MCF 10A (cell line): ENCODE measurements at regions of chr12 and their contacts with region 1.

Region 1: DNA sequence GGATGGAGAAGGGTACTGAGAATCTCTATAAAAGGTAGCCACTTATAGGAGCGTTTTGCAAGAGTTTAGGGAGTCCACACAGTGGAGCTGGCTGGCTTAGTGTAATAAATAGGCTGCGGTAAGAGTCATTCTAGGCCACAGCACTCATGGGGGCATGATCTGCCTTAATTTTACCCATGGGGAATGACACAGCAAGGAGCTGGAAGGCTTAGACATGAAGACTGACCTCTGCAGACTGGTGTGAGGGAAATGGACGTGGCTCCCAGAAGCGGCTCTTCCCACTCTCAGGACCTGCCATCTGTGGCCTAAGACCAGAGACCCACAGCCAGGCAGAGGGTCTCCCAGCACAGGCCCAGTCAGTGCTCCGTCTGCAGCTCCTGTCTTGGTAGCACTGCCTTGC is 173.3 kb downstream of the PPM1H start:
- DNase-seq: no peak
- H3K4me3 Mint-ChIP-seq: no peak overlapping the region
- H3K27ac Mint-ChIP-seq: no peak overlapping the region
- H3K4me1 Mint-ChIP-seq: peaks cover 5% of the 10 kb centered on the region
- H3K27me3 Mint-ChIP-seq: no peaks in the 10 kb centered on the region
- CTCF ChIP-seq: no peak

Region 2: DNA sequence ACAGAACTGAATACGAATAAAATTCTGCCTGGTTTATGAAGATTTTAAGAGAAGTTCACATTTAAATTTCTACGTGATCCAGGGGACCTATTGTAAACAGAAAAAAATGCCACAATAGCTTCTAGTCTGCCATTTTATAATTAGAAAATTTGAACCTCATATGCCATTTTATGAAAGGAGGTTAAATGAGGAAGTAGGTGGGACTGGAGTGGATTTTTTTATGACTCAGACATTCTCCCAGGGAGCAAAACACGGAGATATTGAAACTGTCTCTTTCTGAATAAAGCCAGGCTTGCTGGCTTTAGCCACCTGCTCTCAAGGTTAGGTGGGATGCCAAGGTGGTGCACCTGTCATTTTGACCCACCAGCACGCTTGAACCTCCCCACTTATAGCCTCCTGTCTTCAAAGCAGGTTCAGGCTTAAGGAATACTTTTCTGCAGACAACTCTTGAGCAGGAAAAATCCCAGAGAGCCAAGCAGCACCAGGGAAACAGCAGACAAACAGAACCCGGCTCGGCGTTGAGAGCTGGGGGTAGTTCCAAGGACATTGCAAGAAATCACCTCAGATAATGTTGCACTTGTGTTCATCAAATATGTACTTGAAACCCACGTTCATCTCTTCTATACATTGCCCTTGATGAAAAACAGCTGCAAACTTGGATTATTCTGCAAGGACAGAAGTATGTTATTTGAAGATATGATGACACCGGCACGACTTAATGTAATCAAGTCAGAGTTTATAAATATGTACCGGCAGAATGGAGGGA is 30.4 kb before region 1 on chr12:
- CTCF ChIA-PET with region 1: no interaction called
- POLR2A ChIA-PET with region 1: no interaction called
- intact Hi-C with region 1: loop called (anchors 1 kb)
- DNase-seq: peak; percentile 22
- H3K4me3 Mint-ChIP-seq: no peak overlapping the region
- H3K27ac Mint-ChIP-seq: no peak overlapping the region
- H3K4me1 Mint-ChIP-seq: peaks cover 23% of the 10 kb centered on the region
- H3K27me3 Mint-ChIP-seq: no peaks in the 10 kb centered on the region
- CTCF ChIP-seq: no peak

Region 3: DNA sequence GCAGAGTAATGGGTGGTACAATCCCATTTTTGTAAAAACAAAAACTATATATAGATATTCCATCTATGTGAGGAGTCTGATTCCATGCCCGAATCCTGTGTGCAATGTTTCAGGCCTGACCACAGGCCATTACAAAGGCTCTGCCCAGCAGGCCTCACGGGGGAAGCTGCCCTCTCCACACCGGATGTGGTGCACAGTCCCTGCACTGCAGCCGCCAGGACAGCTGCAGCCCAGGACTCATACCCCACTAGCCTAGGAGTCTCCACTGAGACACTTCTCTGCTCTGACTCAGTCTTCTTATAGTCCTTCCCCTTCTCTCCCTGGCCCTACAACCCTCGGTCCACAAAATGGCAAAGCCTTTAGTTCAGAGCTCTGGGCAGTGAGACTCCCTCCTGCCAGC is 17.1 kb before region 1 on chr12:
- CTCF ChIA-PET with region 1: interaction called, 10 read pairs
- POLR2A ChIA-PET with region 1: no interaction called
- intact Hi-C with region 1: no loop called
- DNase-seq: no peak
- H3K4me3 Mint-ChIP-seq: no peak overlapping the region
- H3K27ac Mint-ChIP-seq: no peak overlapping the region
- H3K4me1 Mint-ChIP-seq: no peaks in the 10 kb centered on the region
- H3K27me3 Mint-ChIP-seq: no peaks in the 10 kb centered on the region
- CTCF ChIP-seq: no peak

Region 4: GRCh38 chr12:62891805-62892549 is 130.3 kb after region 1 on chr12:
- CTCF ChIA-PET with region 1: no interaction called
- POLR2A ChIA-PET with region 1: no interaction called
- intact Hi-C with region 1: no loop called
- DNase-seq: no peak
- H3K4me3 Mint-ChIP-seq: no peak overlapping the region
- H3K27ac Mint-ChIP-seq: no peak overlapping the region
- H3K4me1 Mint-ChIP-seq: no peaks in the 10 kb centered on the region
- H3K27me3 Mint-ChIP-seq: no peaks in the 10 kb centered on the region
- CTCF ChIP-seq: no peak